ENCODE measurements at regions of chr3 and their contacts with region 1.

Region 1: DNA sequence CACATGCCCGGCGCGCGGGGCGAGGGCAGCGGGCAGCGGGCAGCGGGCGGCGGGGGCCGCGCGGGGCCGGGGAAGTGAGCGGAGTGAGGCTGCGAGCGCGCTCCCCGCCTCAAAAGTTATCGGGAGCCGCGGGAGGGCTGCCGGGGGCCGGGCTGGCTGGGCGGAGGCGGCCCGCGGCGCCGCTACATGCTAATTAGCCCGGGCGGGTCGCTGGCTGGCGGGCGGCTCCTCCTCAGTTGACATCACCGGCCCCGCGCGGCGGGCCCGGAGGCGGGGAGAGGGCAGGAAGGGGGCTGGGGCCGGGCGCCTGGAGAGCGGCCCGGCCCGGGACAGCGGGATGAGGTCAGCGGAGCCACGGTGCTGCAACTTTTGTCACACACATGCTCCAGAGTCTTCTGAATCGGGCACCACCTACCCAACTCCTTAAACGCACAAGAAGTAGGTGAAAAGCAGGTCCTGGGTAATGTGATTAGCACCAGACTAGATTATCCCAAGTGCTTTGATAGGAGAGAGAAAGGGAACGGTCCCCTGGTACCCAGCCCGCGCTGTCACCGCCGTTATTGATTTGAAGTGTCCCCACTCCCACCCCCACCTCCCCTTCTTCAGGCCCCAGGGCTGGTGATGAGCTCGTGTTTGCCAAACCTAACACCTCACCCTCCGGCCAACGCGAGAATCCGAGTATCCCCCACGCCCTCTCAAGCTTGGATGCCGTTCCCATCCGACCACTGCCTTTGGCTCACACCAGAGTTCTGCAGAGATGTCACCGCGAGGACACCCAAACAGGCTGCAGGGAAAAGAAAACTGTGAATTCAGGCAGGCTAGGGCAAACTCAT is at the start of gene HEG1:
- DNase-seq: peak; percentile 77
- H3K4me3 Mint-ChIP-seq: peak within 1 kb of the TSS; percentile 97
- H3K27ac Mint-ChIP-seq: peak within 1 kb of the TSS; percentile 87
- H3K4me1 Mint-ChIP-seq: peaks cover 38% of the 10 kb centered on the region
- H3K27me3 Mint-ChIP-seq: peaks cover 18% of the 10 kb centered on the region
- total RNA-seq, gene HEG1: 43.7 and 45.1 TPM in 2 replicates

Region 2: DNA sequence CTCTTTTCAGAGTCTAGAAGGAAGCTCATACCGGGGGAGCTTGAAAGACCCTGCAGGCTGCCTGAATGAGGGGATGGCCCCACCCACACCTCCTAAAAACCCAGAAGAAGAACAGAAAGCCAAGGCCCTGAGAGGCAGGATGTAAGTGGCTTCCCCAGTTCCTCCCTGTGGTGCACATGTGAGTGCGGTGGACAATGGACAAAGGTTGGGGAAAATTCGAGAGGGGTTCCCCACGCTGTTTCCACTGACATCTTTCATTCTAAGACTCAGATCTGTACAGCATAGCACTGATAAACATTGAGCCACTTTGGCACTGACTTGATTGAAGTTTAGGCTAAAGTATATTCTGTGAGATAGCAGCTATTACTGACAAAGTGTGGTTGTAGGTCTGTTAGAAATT is 405.3 kb before region 1 on chr3:
- intact Hi-C with region 1: loop called (anchors 5 kb)
- DNase-seq: no peak
- H3K4me3 Mint-ChIP-seq: no peak overlapping the region
- H3K27ac Mint-ChIP-seq: peak overlapping the region; percentile 27
- H3K4me1 Mint-ChIP-seq: peaks cover 15% of the 10 kb centered on the region
- H3K27me3 Mint-ChIP-seq: peaks cover 32% of the 10 kb centered on the region

Region 3: GRCh38 chr3:125035217-125035616 is 20.9 kb before region 1 on chr3:
- intact Hi-C with region 1: loop called (anchors 1 kb)
- DNase-seq: no peak
- H3K4me3 Mint-ChIP-seq: peak overlapping the region; percentile 45
- H3K27ac Mint-ChIP-seq: peak overlapping the region; percentile 48
- H3K4me1 Mint-ChIP-seq: peaks cover 31% of the 10 kb centered on the region
- H3K27me3 Mint-ChIP-seq: no peaks in the 10 kb centered on the region

Region 4: DNA sequence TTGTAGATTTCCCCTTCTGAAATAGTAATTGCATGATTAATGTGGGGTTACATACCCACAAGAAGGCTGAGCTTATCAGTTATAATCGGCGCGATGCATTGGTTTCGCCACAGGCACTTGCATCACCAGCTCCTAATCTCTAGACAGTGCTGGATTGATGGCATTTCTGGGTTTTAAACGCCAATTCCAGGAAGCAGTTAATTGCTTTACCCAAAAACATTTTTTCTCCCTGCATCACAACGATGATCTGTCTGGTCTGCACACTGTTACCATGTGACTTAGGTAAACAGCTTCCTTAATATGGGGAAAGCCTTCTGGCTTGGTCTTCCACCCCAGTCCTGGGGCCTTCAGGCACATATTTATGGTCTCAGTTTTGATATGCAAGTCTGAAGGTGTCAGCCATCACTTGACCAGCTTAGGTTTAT is 69.7 kb after region 1 on chr3:
- intact Hi-C with region 1: loop called (anchors 1 kb)
- DNase-seq: no peak
- H3K4me3 Mint-ChIP-seq: peak overlapping the region; percentile 12
- H3K27ac Mint-ChIP-seq: peak overlapping the region; percentile 76
- H3K4me1 Mint-ChIP-seq: peaks cover 60% of the 10 kb centered on the region
- H3K27me3 Mint-ChIP-seq: peaks cover 7% of the 10 kb centered on the region

Region 5: GRCh38 chr3:125202197-125202596 is 146.1 kb after region 1 on chr3:
- intact Hi-C with region 1: loop called (anchors 5 kb)
- DNase-seq: no peak
- H3K4me3 Mint-ChIP-seq: no peak overlapping the region
- H3K27ac Mint-ChIP-seq: no peak overlapping the region
- H3K4me1 Mint-ChIP-seq: no peaks in the 10 kb centered on the region
- H3K27me3 Mint-ChIP-seq: peaks cover 28% of the 10 kb centered on the region

Region 6: DNA sequence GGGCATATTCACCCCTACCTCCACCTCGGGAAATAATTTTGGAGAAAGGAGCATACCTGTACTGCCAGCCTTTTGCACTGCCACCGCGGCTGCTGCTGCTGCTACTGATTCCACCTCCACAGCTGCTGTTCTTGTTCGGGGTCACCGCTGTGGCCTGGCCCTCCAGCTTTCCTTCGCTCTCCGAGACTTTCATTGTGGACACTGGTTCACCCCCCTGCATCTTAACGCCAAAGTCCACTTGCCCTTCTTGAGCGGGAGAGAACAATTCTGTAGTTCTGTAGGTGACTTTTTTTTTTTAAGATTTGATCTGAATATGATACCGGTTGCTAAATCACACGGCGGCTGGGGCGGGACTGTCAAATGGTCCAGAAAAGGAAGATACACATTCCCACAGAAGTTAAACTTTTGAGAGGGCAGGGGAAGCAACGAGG is 538.5 kb after region 1 on chr3:
- intact Hi-C with region 1: loop called (anchors 2 kb)
- DNase-seq: peak; percentile 1
- H3K4me3 Mint-ChIP-seq: peak overlapping the region; percentile 95
- H3K27ac Mint-ChIP-seq: peak overlapping the region; percentile 88
- H3K4me1 Mint-ChIP-seq: peaks cover 28% of the 10 kb centered on the region
- H3K27me3 Mint-ChIP-seq: no peaks in the 10 kb centered on the region

Measured in activated T-helper 1 cell treated with anti-CD3 and anti-CD28 coated beads, Interleukin-12 subunit alpha, Interleukin-12 subunit beta, Interleukin-2, Interleukin-4 antibody, amounts not matched to agents 30 ng/mL and 10 ng/mL and 1 ng/mL, durations not matched to agents 14 hours and 24 hours and 36 hours (primary cell).